Caco-2 (cell line): ENCODE measurements at regions of chr6 and their contacts with region 1.

Region 1: DNA sequence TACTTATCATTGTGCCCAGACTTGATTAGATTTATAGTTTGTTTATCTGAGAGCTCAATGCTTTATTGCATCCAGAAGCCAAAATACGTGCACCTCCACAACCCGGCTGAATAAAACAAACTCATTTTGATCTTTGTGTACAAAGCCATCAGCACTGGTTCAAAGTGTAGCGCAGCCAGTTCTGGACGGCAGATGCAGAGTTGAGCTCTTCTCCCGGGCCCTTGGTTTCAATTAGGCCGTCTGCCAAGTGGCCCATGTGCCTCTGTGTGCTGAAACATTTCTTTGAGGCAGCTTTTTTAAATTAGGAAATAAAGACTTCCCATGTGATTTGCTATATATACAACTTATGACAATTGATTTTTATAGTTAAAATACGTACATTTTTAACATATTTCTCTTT is 96.2 kb upstream of the RSPO3 start:
- DNase-seq: peak; percentile 65 to 79
- H3K4me3 ChIP-seq: no peak overlapping the region
- H3K4me3 Mint-ChIP-seq: peak overlapping the region; percentile 32
- H3K27ac Mint-ChIP-seq: peak overlapping the region; percentile 16
- H3K4me1 ChIP-seq: peaks cover 71% of the 10 kb centered on the region
- H3K4me1 Mint-ChIP-seq: peaks cover 43% of the 10 kb centered on the region
- H3K27me3 ChIP-seq: no peaks in the 10 kb centered on the region
- H3K27me3 Mint-ChIP-seq: no peaks in the 10 kb centered on the region
- CTCF ChIP-seq: no peak

Region 2: GRCh38 chr6:126033696-126034095 is 988.6 kb before region 1 on chr6:
- CTCF ChIA-PET with region 1: no interaction called
- POLR2A ChIA-PET with region 1: no interaction called
- intact Hi-C with region 1: loop called (anchors 5 kb)
- DNase-seq: peak; percentile 60 to 68
- H3K4me3 ChIP-seq: no peak overlapping the region
- H3K4me3 Mint-ChIP-seq: no peak overlapping the region
- H3K27ac Mint-ChIP-seq: peak overlapping the region; percentile 48
- H3K4me1 ChIP-seq: peaks cover 54% of the 10 kb centered on the region
- H3K4me1 Mint-ChIP-seq: peaks cover 37% of the 10 kb centered on the region
- H3K27me3 ChIP-seq: no peaks in the 10 kb centered on the region
- H3K27me3 Mint-ChIP-seq: no peaks in the 10 kb centered on the region
- CTCF ChIP-seq: peak; percentile 47 to 78

Region 3: DNA sequence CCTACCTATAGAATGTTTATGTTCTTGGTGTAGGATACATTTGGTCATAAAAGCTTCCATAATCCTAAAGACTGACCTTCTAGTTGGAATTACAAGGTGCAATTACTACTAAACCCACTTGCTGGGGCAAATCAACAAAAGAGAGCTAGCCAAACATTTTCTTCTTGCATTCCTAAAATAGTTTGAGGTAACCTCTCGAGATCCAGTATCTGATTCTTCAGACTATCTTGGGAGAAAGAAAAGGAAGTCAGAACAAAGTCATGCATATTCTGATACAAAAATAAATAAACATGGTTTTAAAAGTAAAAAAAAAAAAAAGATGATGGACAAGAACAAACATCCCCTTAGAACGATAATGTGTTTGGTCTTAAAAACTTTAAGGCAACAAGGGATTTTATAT is 198.1 kb before region 1 on chr6:
- CTCF ChIA-PET with region 1: no interaction called
- POLR2A ChIA-PET with region 1: no interaction called
- intact Hi-C with region 1: loop called (anchors 1 kb)
- DNase-seq: no peak
- H3K4me3 ChIP-seq: no peak overlapping the region
- H3K4me3 Mint-ChIP-seq: no peak overlapping the region
- H3K27ac Mint-ChIP-seq: no peak overlapping the region
- H3K4me1 ChIP-seq: peaks cover 14% of the 10 kb centered on the region
- H3K4me1 Mint-ChIP-seq: peaks cover 17% of the 10 kb centered on the region
- H3K27me3 ChIP-seq: no peaks in the 10 kb centered on the region
- H3K27me3 Mint-ChIP-seq: no peaks in the 10 kb centered on the region
- CTCF ChIP-seq: no peak

Region 4: DNA sequence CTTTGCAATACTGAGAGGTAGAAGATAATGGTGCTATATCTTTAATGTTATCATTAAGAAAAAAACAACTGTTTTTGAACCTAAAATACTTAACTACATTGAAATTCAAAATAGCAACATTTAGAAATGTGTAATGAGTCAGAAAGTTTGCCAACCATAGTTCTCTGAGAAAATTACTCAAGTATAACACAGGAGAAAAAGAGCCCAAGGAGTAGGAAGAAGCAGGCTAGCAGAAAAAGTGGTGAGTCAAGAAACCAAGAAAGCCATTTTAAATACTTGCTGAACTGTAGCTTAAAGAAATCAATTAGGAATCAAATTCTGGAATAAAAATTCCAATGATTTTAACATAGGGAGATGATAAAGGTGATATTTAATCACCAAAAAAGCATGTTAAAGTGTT is 84.9 kb before region 1 on chr6:
- CTCF ChIA-PET with region 1: no interaction called
- POLR2A ChIA-PET with region 1: no interaction called
- intact Hi-C with region 1: no loop called
- DNase-seq: no peak
- H3K4me3 ChIP-seq: no peak overlapping the region
- H3K4me3 Mint-ChIP-seq: no peak overlapping the region
- H3K27ac Mint-ChIP-seq: no peak overlapping the region
- H3K4me1 ChIP-seq: no peaks in the 10 kb centered on the region
- H3K4me1 Mint-ChIP-seq: peaks cover 6% of the 10 kb centered on the region
- H3K27me3 ChIP-seq: no peaks in the 10 kb centered on the region
- H3K27me3 Mint-ChIP-seq: no peaks in the 10 kb centered on the region
- CTCF ChIP-seq: no peak

Region 5: GRCh38 chr6:126949786-126950185 is 72.5 kb before region 1 on chr6:
- CTCF ChIA-PET with region 1: no interaction called
- POLR2A ChIA-PET with region 1: no interaction called
- intact Hi-C with region 1: loop called (anchors 5 kb)
- DNase-seq: no peak
- H3K4me3 ChIP-seq: no peak overlapping the region
- H3K4me3 Mint-ChIP-seq: no peak overlapping the region
- H3K27ac Mint-ChIP-seq: peak overlapping the region; percentile 28
- H3K4me1 ChIP-seq: peaks cover 34% of the 10 kb centered on the region
- H3K4me1 Mint-ChIP-seq: peaks cover 33% of the 10 kb centered on the region
- H3K27me3 ChIP-seq: no peaks in the 10 kb centered on the region
- H3K27me3 Mint-ChIP-seq: no peaks in the 10 kb centered on the region
- CTCF ChIP-seq: no peak

Region 6: DNA sequence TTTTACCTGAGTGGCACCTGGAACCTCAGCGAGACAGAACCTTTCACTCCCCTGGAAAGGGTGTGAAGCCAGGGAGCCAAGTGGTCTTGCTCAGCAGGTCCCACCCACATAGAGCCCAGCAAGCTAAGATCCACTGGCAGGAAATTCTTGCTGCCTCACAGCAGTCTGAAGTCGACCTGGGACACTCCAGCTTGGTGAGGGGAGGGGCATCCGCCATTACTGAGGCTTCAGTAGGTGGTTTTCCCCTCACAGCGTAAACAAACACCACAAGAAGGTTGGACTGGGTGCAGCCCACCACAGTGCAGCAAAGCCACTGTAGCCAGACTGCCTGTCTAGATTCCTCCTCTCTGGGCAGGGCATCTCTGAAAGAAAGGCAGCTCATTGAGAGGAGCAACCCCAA is 38.5 kb before region 1 on chr6:
- CTCF ChIA-PET with region 1: no interaction called
- POLR2A ChIA-PET with region 1: no interaction called
- intact Hi-C with region 1: no loop called
- DNase-seq: no peak
- H3K4me3 ChIP-seq: no peak overlapping the region
- H3K4me3 Mint-ChIP-seq: no peak overlapping the region
- H3K27ac Mint-ChIP-seq: no peak overlapping the region
- H3K4me1 ChIP-seq: 0 out of 2 replicates have a peak, but pooled peaks cover 3% of the 10 kb centered on the region
- H3K4me1 Mint-ChIP-seq: no peaks in the 10 kb centered on the region
- H3K27me3 ChIP-seq: no peaks in the 10 kb centered on the region
- H3K27me3 Mint-ChIP-seq: no peaks in the 10 kb centered on the region
- CTCF ChIP-seq: no peak

Region 7: DNA sequence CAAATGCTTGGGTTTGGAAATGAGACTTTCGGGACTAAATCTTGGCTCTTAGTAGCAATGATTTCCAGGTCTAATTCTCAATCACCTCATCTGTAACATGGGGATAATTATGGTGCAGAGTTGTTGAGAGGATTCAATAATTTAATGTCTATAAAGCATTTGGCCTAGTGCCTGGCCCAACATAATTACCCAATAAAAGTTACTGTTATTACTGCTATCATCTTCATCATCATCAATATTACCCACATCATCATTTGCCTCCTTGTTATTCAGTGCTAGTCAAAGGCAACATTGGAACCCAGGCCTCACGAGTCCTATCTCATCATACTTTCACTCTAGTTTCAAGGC is 61.6 kb after region 1 on chr6:
- CTCF ChIA-PET with region 1: interaction called, 5 read pairs
- POLR2A ChIA-PET with region 1: no interaction called
- intact Hi-C with region 1: loop called (anchors 1 kb)
- DNase-seq: no peak
- H3K4me3 ChIP-seq: no peak overlapping the region
- H3K4me3 Mint-ChIP-seq: no peak overlapping the region
- H3K27ac Mint-ChIP-seq: no peak overlapping the region
- H3K4me1 ChIP-seq: peaks cover 16% of the 10 kb centered on the region
- H3K4me1 Mint-ChIP-seq: peaks cover 27% of the 10 kb centered on the region
- H3K27me3 ChIP-seq: no peaks in the 10 kb centered on the region
- H3K27me3 Mint-ChIP-seq: peaks cover 2% of the 10 kb centered on the region
- CTCF ChIP-seq: no peak